Posterior cingulate gyrus (tissue), 11 donors: ENCODE measurements at regions of chr7 and their contacts with region 1.

Region 1: GRCh38 chr7:10022957-10023356 is 950.7 kb upstream of the PHF14 start:
- DNase-seq: peak in 4 of 10 donors; percentile 7 to 46 (median 27)

Region 2: GRCh38 chr7:9961161-9961923 is 61.6 kb before region 1 on chr7:
- intact Hi-C with region 1: no loop called
- DNase-seq: no peak

Region 3: DNA sequence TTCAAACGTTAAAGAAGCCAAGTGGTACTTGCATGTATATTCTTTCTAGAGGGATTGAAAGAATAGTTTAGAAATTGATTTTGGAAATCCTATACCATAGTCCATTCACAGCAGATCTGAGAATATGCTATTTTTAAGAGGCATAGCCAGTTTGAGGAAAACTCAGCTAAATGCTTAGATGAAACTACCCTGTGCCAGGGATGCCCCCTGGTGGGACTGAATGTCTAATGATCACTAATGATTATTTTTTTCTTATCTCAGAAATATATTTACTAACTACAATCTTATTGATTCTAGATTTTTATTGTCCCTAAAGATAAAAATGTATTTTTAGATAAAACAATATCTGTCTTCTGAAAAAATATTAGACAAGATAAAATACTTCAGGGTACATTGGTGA is 105.8 kb after region 1 on chr7:
- intact Hi-C with region 1: loop called (anchors 2 kb)
- DNase-seq: peak in 6 of 10 donors; percentile 31 to 90 (median 42)

Region 4: GRCh38 chr7:10192074-10192473 is 169.1 kb after region 1 on chr7:
- intact Hi-C with region 1: no loop called
- DNase-seq: no peak

Region 5: GRCh38 chr7:10205696-10206095 is 182.7 kb after region 1 on chr7:
- intact Hi-C with region 1: no loop called
- DNase-seq: no peak

Region 6: DNA sequence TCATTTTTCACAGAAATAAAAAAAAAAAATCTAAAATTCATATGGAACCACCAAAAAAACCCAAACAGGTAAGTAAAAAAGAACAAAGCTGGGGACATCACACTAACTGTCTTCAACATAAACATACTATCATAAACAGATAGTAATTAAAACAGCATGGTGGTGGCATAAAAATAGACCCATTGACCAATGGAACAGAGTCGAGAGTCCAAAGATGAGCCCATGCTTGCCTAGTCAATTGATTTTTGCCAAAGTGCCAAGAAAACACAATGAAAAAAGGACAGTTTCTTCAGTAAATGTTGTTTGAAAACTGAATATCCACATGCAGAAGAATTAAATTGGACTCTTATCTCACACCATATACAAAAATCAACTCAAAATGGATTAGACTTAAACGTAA is 437.5 kb after region 1 on chr7:
- intact Hi-C with region 1: no loop called
- DNase-seq: no peak